ENCODE measurements at regions of chr1 and their contacts with region 1.

Region 1: GRCh38 chr1:96721416-96722160 is at the start of gene PTBP2:
- DNase-seq: peak; percentile 69
- ATAC-seq: peak; percentile 96
- H3K4me3 ChIP-seq: peak within 1 kb of the TSS; percentile 96
- H3K27ac ChIP-seq: peak within 1 kb of the TSS; percentile 96
- H3K4me1 ChIP-seq: no peaks in the 10 kb centered on the region; the same call in 1 of the 2 replicates
- H3K27me3 ChIP-seq: no peaks in the 10 kb centered on the region
- CTCF ChIP-seq: no peak
- POLR2A ChIP-seq: peak; percentile 74; the same call in 1 of the 2 replicates
- RAD21 ChIP-seq: no peak
- total RNA-seq, gene PTBP2: 37.8 and 38.6 TPM in 2 replicates

Region 2: GRCh38 chr1:96236156-96236739 is 485.3 kb before region 1 on chr1:
- CTCF ChIA-PET with region 1: interaction called, 3 read pairs
- POLR2A ChIA-PET with region 1: no interaction called
- dilution Hi-C with region 1: no loop called
- in situ Hi-C with region 1: no loop called
- intact Hi-C with region 1: loop called (anchors 1 kb)
- DNase-seq: peak; percentile 75
- ATAC-seq: peak; percentile 75
- H3K4me3 ChIP-seq: no peak overlapping the region
- H3K27ac ChIP-seq: no peak overlapping the region
- H3K4me1 ChIP-seq: no peaks in the 10 kb centered on the region
- H3K27me3 ChIP-seq: no peaks in the 10 kb centered on the region
- CTCF ChIP-seq: peak; percentile 71
- POLR2A ChIP-seq: no peak
- RAD21 ChIP-seq: peak; percentile 83

Region 3: GRCh38 chr1:96416111-96416595 is 305.4 kb before region 1 on chr1:
- CTCF ChIA-PET with region 1: no interaction called
- POLR2A ChIA-PET with region 1: no interaction called
- dilution Hi-C with region 1: no loop called
- in situ Hi-C with region 1: no loop called
- intact Hi-C with region 1: loop called (anchors 5 kb)
- DNase-seq: peak; percentile 99
- ATAC-seq: peak; percentile 96
- H3K4me3 ChIP-seq: no peak overlapping the region
- H3K27ac ChIP-seq: peak overlapping the region; percentile 47; the same call in 1 of the 2 replicates
- H3K4me1 ChIP-seq: no peaks in the 10 kb centered on the region
- H3K27me3 ChIP-seq: peaks cover 2% of the 10 kb centered on the region; the same call in 1 of the 2 replicates
- CTCF ChIP-seq: no peak
- POLR2A ChIP-seq: no peak
- RAD21 ChIP-seq: peak; percentile 21; the same call in 1 of the 2 replicates

Region 4: DNA sequence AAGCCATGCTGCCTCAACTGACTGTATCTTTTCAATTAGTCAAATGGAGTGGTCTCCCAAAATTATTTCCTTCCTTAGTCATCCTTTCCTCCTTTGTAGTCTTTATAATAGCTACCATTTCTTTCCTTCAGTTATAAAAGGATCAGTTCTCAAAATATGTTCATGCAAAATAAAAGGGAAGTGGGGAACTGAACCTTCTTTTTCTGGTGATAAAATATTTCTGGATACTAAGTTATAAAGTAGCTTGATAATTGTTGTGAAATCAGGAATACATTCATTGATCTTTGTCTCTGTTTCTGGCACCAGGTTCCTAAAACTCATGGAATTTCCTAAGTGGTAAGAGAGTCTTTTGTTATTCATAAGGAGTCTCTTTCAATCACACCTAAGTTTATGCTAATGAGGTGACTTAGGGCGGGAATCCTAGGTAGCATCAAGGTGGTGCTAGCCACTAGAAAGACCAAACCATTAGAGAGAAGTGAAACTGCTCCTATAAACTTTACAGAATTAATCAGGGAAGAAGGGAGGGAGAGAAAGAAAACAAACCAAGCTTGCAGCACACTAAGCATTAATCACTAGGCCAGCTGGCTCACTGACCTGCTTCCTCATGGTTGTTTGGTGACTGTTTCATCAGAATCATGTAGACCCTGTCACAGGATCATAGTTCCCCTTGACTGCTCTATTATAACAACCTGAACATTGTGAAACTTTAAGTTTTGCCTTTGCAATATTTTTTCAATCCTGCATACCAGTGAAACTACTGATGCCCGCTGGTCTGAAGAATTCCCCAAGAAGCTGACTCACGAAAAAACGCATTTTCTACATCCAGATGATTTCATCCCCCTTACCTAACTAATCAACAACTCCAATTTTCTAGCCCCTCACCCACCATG is 161.6 kb before region 1 on chr1:
- CTCF ChIA-PET with region 1: no interaction called
- POLR2A ChIA-PET with region 1: no interaction called
- dilution Hi-C with region 1: no loop called
- in situ Hi-C with region 1: no loop called
- intact Hi-C with region 1: loop called (anchors 10 kb)
- DNase-seq: peak; percentile 99
- ATAC-seq: peak; percentile 92
- H3K4me3 ChIP-seq: no peak overlapping the region
- H3K27ac ChIP-seq: peak overlapping the region; percentile 77
- H3K4me1 ChIP-seq: peaks cover 3% of the 10 kb centered on the region; the same call in 1 of the 2 replicates
- H3K27me3 ChIP-seq: no peaks in the 10 kb centered on the region
- CTCF ChIP-seq: no peak
- POLR2A ChIP-seq: no peak
- RAD21 ChIP-seq: 0 out of 2 replicates have a peak, but pooled peaks have one; percentile 1

Region 5: DNA sequence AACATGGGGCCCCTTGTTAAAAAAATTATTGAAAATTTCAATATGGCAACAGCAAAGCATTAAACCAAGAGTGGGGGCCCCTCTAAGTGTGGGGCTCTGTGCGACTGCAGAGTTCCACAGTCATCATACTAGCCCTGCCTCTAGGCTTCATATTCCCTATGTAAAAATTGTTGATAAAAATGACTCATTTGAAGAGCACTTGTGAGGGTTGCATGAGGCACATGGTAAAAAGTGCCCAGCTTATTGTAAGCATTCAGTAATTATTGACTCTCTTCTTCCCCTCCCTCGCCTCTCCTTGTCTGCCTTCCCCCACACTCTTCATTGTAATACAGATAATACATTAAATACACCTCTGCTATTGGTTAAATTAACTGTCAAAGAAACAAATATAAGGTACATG is 86.7 kb before region 1 on chr1:
- CTCF ChIA-PET with region 1: no interaction called
- POLR2A ChIA-PET with region 1: no interaction called
- dilution Hi-C with region 1: no loop called
- in situ Hi-C with region 1: no loop called
- intact Hi-C with region 1: no loop called
- DNase-seq: peak; percentile 64
- ATAC-seq: peak; percentile 96
- H3K4me3 ChIP-seq: no peak overlapping the region
- H3K27ac ChIP-seq: no peak overlapping the region
- H3K4me1 ChIP-seq: no peaks in the 10 kb centered on the region
- H3K27me3 ChIP-seq: no peaks in the 10 kb centered on the region
- CTCF ChIP-seq: no peak
- POLR2A ChIP-seq: no peak
- RAD21 ChIP-seq: no peak

Region 6: DNA sequence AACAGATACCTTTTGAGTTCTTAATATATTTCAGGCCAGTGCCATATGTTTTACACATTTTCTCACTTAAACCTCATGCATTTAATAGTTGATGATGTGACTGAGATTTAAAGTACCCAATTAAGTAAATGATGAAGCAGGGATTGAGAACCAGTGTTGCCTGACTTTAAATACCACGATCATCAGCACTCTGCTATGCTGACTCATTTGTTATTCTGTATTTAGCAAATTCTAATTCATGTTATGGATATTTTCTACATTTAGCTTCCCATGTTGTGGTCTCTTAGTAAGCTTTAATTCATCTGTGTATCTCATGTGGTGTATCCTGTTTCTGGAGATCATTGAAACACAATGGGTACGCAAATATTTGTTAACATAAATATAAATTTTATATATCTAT is 363.0 kb after region 1 on chr1:
- CTCF ChIA-PET with region 1: no interaction called
- POLR2A ChIA-PET with region 1: no interaction called
- dilution Hi-C with region 1: no loop called
- in situ Hi-C with region 1: no loop called
- intact Hi-C with region 1: no loop called
- DNase-seq: peak; percentile 66
- ATAC-seq: peak; percentile 75
- H3K4me3 ChIP-seq: no peak overlapping the region
- H3K27ac ChIP-seq: no peak overlapping the region
- H3K4me1 ChIP-seq: peaks cover 3% of the 10 kb centered on the region; the same call in 1 of the 2 replicates
- H3K27me3 ChIP-seq: no peaks in the 10 kb centered on the region
- CTCF ChIP-seq: no peak
- POLR2A ChIP-seq: no peak
- RAD21 ChIP-seq: no peak